ENCODE measurements at regions of chr12 and their contacts with region 1.

Region 1: DNA sequence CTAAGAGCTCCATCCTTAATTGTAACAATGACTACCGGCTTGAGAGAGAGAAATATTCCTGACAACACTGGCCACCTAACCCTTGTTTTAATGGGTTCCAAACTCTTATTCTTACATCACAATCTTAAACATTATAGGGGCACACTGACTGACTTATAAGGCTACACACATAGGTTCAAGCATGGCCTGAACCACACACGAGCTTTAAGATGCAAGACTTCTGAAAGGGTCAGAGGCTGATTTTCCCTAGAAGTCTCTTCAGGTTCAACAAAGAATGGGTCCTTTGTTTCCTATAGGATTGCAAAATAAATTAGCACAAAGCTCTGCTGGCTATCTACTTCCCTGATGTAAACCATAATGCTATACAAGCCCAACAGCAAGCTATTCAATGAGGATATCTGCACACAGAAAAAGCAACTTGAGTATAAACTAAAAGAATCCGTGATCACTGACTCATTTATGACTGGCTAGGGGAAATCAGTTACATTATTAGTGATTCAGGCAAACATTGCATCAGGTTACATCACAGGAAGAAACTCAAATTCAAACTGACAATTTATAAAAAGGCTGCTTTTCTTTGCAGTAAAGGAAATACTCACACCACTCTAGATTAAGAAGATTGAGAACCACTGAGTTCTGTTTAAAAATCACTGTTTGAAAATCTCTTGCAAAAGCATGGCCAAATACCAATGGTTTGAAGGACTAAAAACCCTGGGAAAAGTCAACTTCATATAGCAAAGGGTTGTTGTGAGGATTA is 8.5 kb downstream of the BTG1 start:
- DNase-seq: peak in 2 of 14 experiments; percentile 52 to 56
- ATAC-seq: no peak
- H3K4me3 ChIP-seq: peak overlapping the region; percentile 94
- H3K4me3 Mint-ChIP-seq: peak overlapping the region; percentile 100
- H3K27ac ChIP-seq: peak overlapping the region; percentile 29 to 62
- H3K27ac Mint-ChIP-seq: peak overlapping the region; percentile 99
- H3K4me1 ChIP-seq: peaks cover 31% of the 10 kb centered on the region
- H3K4me1 Mint-ChIP-seq: peaks cover 55% of the 10 kb centered on the region
- H3K27me3 ChIP-seq: no peaks in the 10 kb centered on the region
- H3K27me3 Mint-ChIP-seq: no peaks in the 10 kb centered on the region
- CTCF ChIP-seq: no peak

Region 2: GRCh38 chr12:91778938-91779400 is 358.2 kb before region 1 on chr12:
- CTCF ChIA-PET with region 1: no interaction called
- POLR2A ChIA-PET with region 1: interaction called, 7 read pairs
- intact Hi-C with region 1: loop called in 1 of 2 experiments (anchors 10 kb)
- DNase-seq: peak; percentile 3 to 75 (median 31)
- ATAC-seq: peak; percentile 75
- H3K4me3 ChIP-seq: peak overlapping the region; percentile 30
- H3K4me3 Mint-ChIP-seq: peak overlapping the region; percentile 78
- H3K27ac ChIP-seq: peak overlapping the region; percentile 67 to 72
- H3K27ac Mint-ChIP-seq: peak overlapping the region; percentile 87
- H3K4me1 ChIP-seq: peaks cover 5% of the 10 kb centered on the region
- H3K4me1 Mint-ChIP-seq: peaks cover 57% of the 10 kb centered on the region
- H3K27me3 ChIP-seq: no peaks in the 10 kb centered on the region
- H3K27me3 Mint-ChIP-seq: no peaks in the 10 kb centered on the region
- CTCF ChIP-seq: no peak

Region 3: GRCh38 chr12:91991399-91992187 is 145.6 kb before region 1 on chr12:
- CTCF ChIA-PET with region 1: no interaction called
- POLR2A ChIA-PET with region 1: interaction called, 112 read pairs
- intact Hi-C with region 1: loop called in 1 of 2 experiments (anchors 1 kb)
- DNase-seq: peak in 3 of 14 experiments; percentile 72 to 79 (median 76)
- ATAC-seq: peak; percentile 89
- H3K4me3 ChIP-seq: no peak overlapping the region
- H3K4me3 Mint-ChIP-seq: peak overlapping the region; percentile 6
- H3K27ac ChIP-seq: no peak overlapping the region
- H3K27ac Mint-ChIP-seq: peak overlapping the region; percentile 59
- H3K4me1 ChIP-seq: peaks cover 3% of the 10 kb centered on the region
- H3K4me1 Mint-ChIP-seq: peaks cover 75% of the 10 kb centered on the region
- H3K27me3 ChIP-seq: no peaks in the 10 kb centered on the region
- H3K27me3 Mint-ChIP-seq: no peaks in the 10 kb centered on the region
- CTCF ChIP-seq: peak; percentile 58

Region 4: DNA sequence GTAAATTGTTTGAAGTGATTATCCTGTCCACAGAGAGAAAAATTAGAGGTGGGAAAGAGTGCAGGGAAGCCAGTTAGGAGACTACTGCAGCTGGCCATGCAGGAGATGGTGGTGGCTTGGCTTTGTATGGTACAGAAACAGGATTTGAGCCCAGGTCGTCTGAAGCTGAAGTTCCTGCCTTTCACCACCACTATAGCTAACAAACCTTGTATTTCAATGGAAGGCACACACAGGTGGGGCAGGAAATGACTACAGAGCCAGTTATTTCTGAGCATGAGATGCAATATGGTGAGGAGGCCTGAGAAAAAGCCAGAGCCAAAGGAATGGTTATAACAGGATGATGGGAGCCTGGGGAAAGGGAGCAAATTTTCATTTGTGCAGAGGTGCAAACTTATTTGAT is 95.4 kb before region 1 on chr12:
- CTCF ChIA-PET with region 1: no interaction called
- POLR2A ChIA-PET with region 1: interaction called, 276 read pairs
- intact Hi-C with region 1: loop called in 1 of 2 experiments (anchors 5 kb)
- DNase-seq: peak in 7 of 14 experiments; percentile 21 to 75 (median 57)
- ATAC-seq: peak; percentile 97
- H3K4me3 ChIP-seq: no peak overlapping the region
- H3K4me3 Mint-ChIP-seq: peak overlapping the region; percentile 77
- H3K27ac ChIP-seq: peak overlapping the region in 1 of 2 donors; percentile 20
- H3K27ac Mint-ChIP-seq: peak overlapping the region; percentile 85
- H3K4me1 ChIP-seq: peaks cover 47% of the 10 kb centered on the region
- H3K4me1 Mint-ChIP-seq: peaks cover 88% of the 10 kb centered on the region
- H3K27me3 ChIP-seq: no peaks in the 10 kb centered on the region
- H3K27me3 Mint-ChIP-seq: no peaks in the 10 kb centered on the region
- CTCF ChIP-seq: no peak

Region 5: DNA sequence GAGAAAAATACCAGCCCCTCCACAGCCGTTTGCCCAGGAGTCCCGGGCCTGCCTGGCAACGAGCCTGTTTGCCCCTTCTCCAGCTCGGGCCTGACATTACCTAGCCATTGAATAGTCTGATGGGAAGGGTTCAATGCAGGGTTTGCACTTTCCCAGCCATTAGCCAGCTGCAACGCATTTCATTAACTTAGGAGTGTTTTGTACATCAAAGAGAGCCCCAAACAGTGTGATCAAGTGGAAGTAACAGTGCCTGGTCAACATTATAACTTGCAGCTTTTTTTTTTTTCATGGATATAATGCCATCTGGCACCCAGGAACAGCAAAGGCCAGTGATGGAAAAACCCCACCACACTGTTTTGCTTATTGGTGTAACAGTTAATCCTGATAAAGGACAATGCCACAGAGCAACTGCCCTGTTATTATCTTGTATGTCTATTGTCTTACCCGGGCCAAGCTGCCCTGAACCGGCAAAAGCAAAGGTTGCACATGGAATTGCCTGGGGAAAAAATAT is 29.5 kb before region 1 on chr12:
- CTCF ChIA-PET with region 1: no interaction called
- POLR2A ChIA-PET with region 1: interaction called, 10 read pairs
- intact Hi-C with region 1: no loop called
- DNase-seq: no peak
- ATAC-seq: no peak
- H3K4me3 ChIP-seq: no peak overlapping the region
- H3K4me3 Mint-ChIP-seq: peak overlapping the region; percentile 51
- H3K27ac ChIP-seq: no peak overlapping the region
- H3K27ac Mint-ChIP-seq: peak overlapping the region; percentile 42
- H3K4me1 ChIP-seq: peaks cover 27% of the 10 kb centered on the region
- H3K4me1 Mint-ChIP-seq: peaks cover 76% of the 10 kb centered on the region
- H3K27me3 ChIP-seq: no peaks in the 10 kb centered on the region
- H3K27me3 Mint-ChIP-seq: no peaks in the 10 kb centered on the region
- CTCF ChIP-seq: no peak

Region 6: GRCh38 chr12:92167075-92167474 is 29.9 kb after region 1 on chr12:
- CTCF ChIA-PET with region 1: no interaction called
- POLR2A ChIA-PET with region 1: no interaction called
- intact Hi-C with region 1: no loop called
- DNase-seq: no peak
- ATAC-seq: no peak
- H3K4me3 ChIP-seq: no peak overlapping the region
- H3K4me3 Mint-ChIP-seq: no peak overlapping the region
- H3K27ac ChIP-seq: no peak overlapping the region
- H3K27ac Mint-ChIP-seq: no peak overlapping the region
- H3K4me1 ChIP-seq: no peaks in the 10 kb centered on the region
- H3K4me1 Mint-ChIP-seq: peaks cover 46% of the 10 kb centered on the region
- H3K27me3 ChIP-seq: no peaks in the 10 kb centered on the region
- H3K27me3 Mint-ChIP-seq: no peaks in the 10 kb centered on the region
- CTCF ChIP-seq: no peak

Region 7: DNA sequence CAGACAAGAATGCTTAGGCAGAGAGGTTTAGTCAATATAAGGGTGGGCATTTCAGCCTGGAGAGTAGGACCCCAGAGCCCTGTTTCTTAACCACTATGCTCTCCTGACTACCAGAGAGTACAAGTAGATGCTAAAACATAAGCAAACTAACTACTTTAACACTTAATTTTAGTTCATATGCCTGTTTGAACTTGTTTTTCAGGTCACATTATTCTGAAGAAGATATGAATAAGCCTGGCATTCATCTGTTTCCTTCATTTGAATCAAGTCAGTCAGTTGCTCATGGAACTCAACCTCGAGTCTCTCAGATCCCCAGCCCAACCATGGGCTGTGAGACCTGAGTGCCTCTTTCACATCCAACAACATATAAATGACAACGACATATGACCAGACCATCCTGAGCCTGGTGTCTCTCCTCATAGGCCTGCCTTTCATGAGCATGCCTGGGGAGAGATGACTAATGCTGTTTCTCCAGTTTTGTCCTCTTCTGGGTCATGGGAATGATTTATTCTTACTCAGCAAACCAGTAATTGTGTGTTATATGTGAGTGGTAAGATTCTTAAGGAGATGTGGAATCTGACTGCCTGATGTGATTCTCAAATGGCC is 259.6 kb after region 1 on chr12:
- CTCF ChIA-PET with region 1: no interaction called
- POLR2A ChIA-PET with region 1: interaction called, 210 read pairs
- intact Hi-C with region 1: no loop called
- DNase-seq: peak in 1 of 14 experiments; percentile 29
- ATAC-seq: no peak
- H3K4me3 ChIP-seq: no peak overlapping the region
- H3K4me3 Mint-ChIP-seq: peak overlapping the region; percentile 52
- H3K27ac ChIP-seq: peak overlapping the region; percentile 72 to 80
- H3K27ac Mint-ChIP-seq: peak overlapping the region; percentile 95
- H3K4me1 ChIP-seq: peaks cover 81% of the 10 kb centered on the region
- H3K4me1 Mint-ChIP-seq: peaks cover 99% of the 10 kb centered on the region
- H3K27me3 ChIP-seq: no peaks in the 10 kb centered on the region
- H3K27me3 Mint-ChIP-seq: no peaks in the 10 kb centered on the region
- CTCF ChIP-seq: no peak

Region 8: GRCh38 chr12:93098077-93098476 is 960.9 kb after region 1 on chr12:
- CTCF ChIA-PET with region 1: no interaction called
- POLR2A ChIA-PET with region 1: no interaction called
- intact Hi-C with region 1: no loop called
- DNase-seq: peak; percentile 32 to 81 (median 60)
- ATAC-seq: peak; percentile 84
- H3K4me3 ChIP-seq: no peak overlapping the region
- H3K4me3 Mint-ChIP-seq: no peak overlapping the region
- H3K27ac ChIP-seq: no peak overlapping the region
- H3K27ac Mint-ChIP-seq: no peak overlapping the region
- H3K4me1 ChIP-seq: peaks cover 3% of the 10 kb centered on the region
- H3K4me1 Mint-ChIP-seq: peaks cover 5% of the 10 kb centered on the region
- H3K27me3 ChIP-seq: no peaks in the 10 kb centered on the region
- H3K27me3 Mint-ChIP-seq: peaks cover 6% of the 10 kb centered on the region
- CTCF ChIP-seq: peak; percentile 61

Measured in CD4-positive, alpha-beta T cell (primary cell).